ENCODE measurements at regions of chr4 and their contacts with region 1.

Region 1: GRCh38 chr4:52712172-52712990 is 38.8 kb downstream of the ERVMER34-1 start:
- DNase-seq: peak; percentile 96 to 100 (median 99)
- H3K4me3 ChIP-seq: peak overlapping the region; percentile 53 to 100 (median 91)
- H3K27ac ChIP-seq: peak overlapping the region in 58 of 59 donors; percentile 28 to 96 (median 88)
- H3K27me3 ChIP-seq: no peaks in the 10 kb centered on the region
- CTCF ChIP-seq: peak in 21 of 56 donors; percentile 6 to 49 (median 23)

Region 2: DNA sequence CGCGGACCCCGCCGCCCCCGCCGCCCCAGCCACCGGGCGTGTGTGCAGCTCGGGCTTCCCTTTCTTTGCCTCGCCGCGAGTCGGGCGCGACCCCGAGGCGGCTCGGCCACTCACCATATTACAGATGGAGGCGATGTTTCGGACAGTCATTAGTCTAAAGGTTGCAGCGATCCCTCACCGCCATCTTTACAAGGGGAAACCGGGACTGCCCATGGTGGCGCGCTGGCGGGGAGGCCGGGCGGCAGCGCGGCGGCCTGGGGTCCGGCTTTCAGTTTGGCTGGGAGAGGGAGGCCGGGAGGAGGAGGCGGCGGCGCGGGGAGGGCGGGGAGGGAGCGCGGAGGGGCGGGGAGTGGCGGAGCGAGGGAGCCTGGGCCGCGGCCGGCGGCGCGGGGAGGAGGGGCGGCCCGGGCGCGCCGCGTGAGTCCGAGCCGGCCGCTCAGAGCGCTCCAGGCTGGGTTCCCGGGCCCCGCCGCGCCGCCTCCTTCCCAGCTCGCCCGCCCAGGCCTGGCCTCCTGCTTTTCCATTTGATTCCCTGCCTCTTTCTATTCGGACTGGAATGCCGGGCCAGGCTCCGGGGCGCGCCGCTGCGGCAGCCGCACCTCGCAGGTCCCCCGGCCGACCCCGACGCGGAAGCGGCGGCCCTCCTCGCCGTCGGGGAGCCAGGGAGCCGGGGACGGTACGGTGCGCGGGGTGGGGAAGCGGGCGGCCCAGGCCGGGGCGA is 53.2 kb before region 1 on chr4 and contains the start of gene USP46:
- intact Hi-C with region 1: loop called (anchors 2 kb)
- DNase-seq: peak; percentile 42 to 80 (median 64)
- H3K4me3 ChIP-seq: peak within 1 kb of the TSS; percentile 62 to 94 (median 79)
- H3K27ac ChIP-seq: peak within 1 kb of the TSS; percentile 45 to 98 (median 92)
- H3K27me3 ChIP-seq: no peaks in the 10 kb centered on the region
- CTCF ChIP-seq: peak in 3 of 56 donors; percentile 3 to 13 (median 8)
- total RNA-seq, gene USP46: 55.4 to 143 (median 107) TPM

Region 3: GRCh38 chr4:52813546-52813945 is 101.2 kb after region 1 on chr4:
- intact Hi-C with region 1: no loop called
- DNase-seq: no peak
- H3K4me3 ChIP-seq: no peak overlapping the region
- H3K27ac ChIP-seq: no peak overlapping the region
- H3K27me3 ChIP-seq: no peaks in the 10 kb centered on the region
- CTCF ChIP-seq: no peak

Region 4: DNA sequence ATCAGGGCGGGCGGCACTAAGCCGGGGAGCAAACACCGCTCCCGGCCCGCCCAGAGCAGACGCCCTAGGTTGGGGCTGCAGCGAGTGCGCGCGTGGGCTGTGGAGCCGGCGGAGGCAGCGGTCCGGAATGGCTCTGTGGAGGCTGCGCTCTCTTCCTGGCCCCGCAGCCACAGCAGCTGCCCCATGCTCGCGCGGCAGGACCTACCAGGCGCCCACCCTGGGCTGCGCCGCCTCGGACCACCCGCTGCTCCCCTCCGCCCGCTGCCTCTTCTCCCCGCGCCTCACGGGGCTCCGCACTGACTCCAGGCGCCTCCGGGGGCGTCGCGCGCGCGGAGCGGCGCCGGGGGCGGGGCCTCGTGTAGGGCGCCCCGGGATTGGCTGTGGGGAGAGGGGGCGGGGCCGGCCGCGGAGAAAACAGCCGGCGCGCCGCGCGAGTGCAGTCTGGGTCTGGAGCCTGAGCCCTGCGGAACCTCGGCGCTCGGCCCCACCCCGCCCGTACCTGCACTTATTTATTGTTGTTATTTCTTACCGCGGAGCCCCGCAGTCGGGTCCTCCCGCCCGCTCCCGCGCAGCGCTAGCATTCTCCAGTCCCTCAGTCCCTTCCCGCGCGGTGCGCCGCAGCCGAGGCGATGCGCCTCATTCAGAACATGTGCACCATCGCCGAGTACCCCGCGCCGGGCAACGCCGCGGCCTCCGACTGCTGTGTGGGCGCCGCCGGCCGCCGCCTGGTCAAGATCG is 149.7 kb after region 1 on chr4 and contains the start of gene RASL11B:
- intact Hi-C with region 1: loop called (anchors 5 kb)
- DNase-seq: peak; percentile 73 to 93 (median 84)
- H3K4me3 ChIP-seq: peak within 1 kb of the TSS; percentile 54 to 86 (median 74)
- H3K27ac ChIP-seq: peak within 1 kb of the TSS in 56 of 59 donors; percentile 21 to 90 (median 78)
- H3K27me3 ChIP-seq: no peaks in the 10 kb centered on the region
- CTCF ChIP-seq: peak in 38 of 56 donors; percentile 8 to 60 (median 38)
- total RNA-seq, gene RASL11B: 4.6 to 31.0 (median 16.9) TPM

Region 5: DNA sequence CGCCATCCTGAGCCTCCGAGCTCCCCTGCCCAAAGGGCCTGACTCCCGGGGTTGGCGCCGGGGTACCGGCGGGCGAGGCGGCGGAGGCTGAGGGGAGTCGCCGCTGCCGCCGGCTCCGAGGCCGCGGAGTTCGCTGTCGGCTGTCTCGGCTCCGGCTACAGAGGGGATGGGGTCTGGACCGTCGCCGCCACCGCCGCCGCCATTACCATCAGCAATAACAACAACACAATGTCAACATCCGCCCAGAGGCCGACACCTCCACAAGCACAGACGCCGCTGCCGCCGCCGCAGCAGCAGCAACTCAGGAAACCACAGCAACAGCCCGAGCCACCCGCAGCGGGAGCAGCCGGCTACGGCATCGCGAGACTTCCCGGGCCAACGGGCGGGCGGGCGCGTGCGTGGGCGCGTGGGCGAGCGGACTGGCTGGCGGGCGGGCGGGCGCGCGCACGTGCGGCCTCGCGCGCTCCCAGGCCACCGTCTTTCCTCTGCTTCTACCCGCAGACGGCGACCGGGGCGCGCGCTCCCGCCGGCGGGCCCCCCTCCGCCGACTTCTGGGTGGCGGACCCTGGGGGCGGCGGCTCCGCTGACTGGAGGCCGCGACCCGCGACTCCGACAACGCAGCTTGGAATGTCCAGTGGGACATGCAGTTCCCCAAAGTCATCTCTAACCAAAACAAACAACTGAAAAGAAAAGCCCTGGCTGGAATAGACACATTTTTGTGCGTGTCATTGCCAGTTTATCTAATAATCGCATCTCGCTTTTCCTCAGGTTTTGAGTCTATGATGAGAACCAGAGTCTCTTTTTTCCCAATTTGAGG is 1352.1 kb after region 1 on chr4 and contains the start of gene CHIC2:
- intact Hi-C with region 1: loop called in 1 of 2 experiments (anchors 10 kb)
- DNase-seq: peak; percentile 79 to 95 (median 92)
- H3K4me3 ChIP-seq: peak within 1 kb of the TSS; percentile 56 to 99 (median 94)
- H3K27ac ChIP-seq: peak within 1 kb of the TSS in 58 of 59 donors; percentile 56 to 94 (median 85)
- H3K27me3 ChIP-seq: no peaks in the 10 kb centered on the region
- CTCF ChIP-seq: peak in 7 of 56 donors; percentile 8 to 31 (median 20)
- total RNA-seq, gene CHIC2: 10.0 to 28.8 (median 19.4) TPM

Measured in dorsolateral prefrontal cortex (tissue), 120 donors.